Naive thymus-derived CD4-positive, alpha-beta T cell (primary cell): ENCODE measurements at regions of chr6 and their contacts with region 1.

Region 1: GRCh38 chr6:3068329-3069214 is at the start of gene RIPK1:
- DNase-seq: peak; percentile 92 to 98 (median 95)
- ATAC-seq: peak; percentile 88
- H3K4me3 ChIP-seq: peak within 1 kb of the TSS; percentile 86
- H3K4me3 Mint-ChIP-seq: peak within 1 kb of the TSS; percentile 91 to 99 (median 96)
- H3K27ac ChIP-seq: peak within 1 kb of the TSS; percentile 99
- H3K27ac Mint-ChIP-seq: peak within 1 kb of the TSS; percentile 92 to 99 (median 98)
- H3K4me1 ChIP-seq: peaks cover 23% of the 10 kb centered on the region in 2 donors
- H3K4me1 Mint-ChIP-seq: peaks cover 41 to 83% (median 69%) of the 10 kb centered on the region in 7 donors
- H3K27me3 ChIP-seq: no peaks in the 10 kb centered on the region
- H3K27me3 Mint-ChIP-seq: no peaks in the 10 kb centered on the region
- total RNA-seq, gene RIPK1: 20.3 to 34.8 (median 32.4) TPM

Region 2: GRCh38 chr6:2853761-2854395 is 214.7 kb before region 1 on chr6:
- CTCF ChIA-PET with region 1: no interaction called
- POLR2A ChIA-PET with region 1: interaction called, 7 read pairs
- intact Hi-C with region 1: loop called in 1 of 2 experiments (anchors 5 kb)
- DNase-seq: peak in 5 of 9 donors; percentile 23 to 70 (median 40)
- ATAC-seq: peak; percentile 61
- H3K4me3 ChIP-seq: peak overlapping the region; percentile 53
- H3K4me3 Mint-ChIP-seq: peak overlapping the region; percentile 65 to 97 (median 78)
- H3K27ac ChIP-seq: peak overlapping the region; percentile 65
- H3K27ac Mint-ChIP-seq: peak overlapping the region; percentile 79 to 100 (median 98)
- H3K4me1 ChIP-seq: peaks cover 59 to 61% of the 10 kb centered on the region in 2 donors
- H3K4me1 Mint-ChIP-seq: peaks cover 42 to 74% (median 71%) of the 10 kb centered on the region in 7 donors
- H3K27me3 ChIP-seq: no peaks in the 10 kb centered on the region
- H3K27me3 Mint-ChIP-seq: no peaks in the 10 kb centered on the region

Region 3: GRCh38 chr6:3031857-3032640 is 36.5 kb before region 1 on chr6:
- CTCF ChIA-PET with region 1: interaction called, 3 read pairs
- POLR2A ChIA-PET with region 1: interaction called, 6 read pairs
- intact Hi-C with region 1: loop called in 1 of 2 experiments (anchors 1 kb)
- DNase-seq: peak in 4 of 9 donors; percentile 18 to 43 (median 36)
- ATAC-seq: peak; percentile 61
- H3K4me3 ChIP-seq: no peak overlapping the region
- H3K4me3 Mint-ChIP-seq: no peak overlapping the region
- H3K27ac ChIP-seq: no peak overlapping the region
- H3K27ac Mint-ChIP-seq: no peak overlapping the region
- H3K4me1 ChIP-seq: peaks cover 5% of the 10 kb centered on the region in 2 donors
- H3K4me1 Mint-ChIP-seq: peaks cover 3 to 25% (median 14%) of the 10 kb centered on the region in 7 donors
- H3K27me3 ChIP-seq: no peaks in the 10 kb centered on the region
- H3K27me3 Mint-ChIP-seq: peaks cover 0 to 47% (median 0%) of the 10 kb centered on the region in 5 donors

Region 4: GRCh38 chr6:3125815-3126214 is 57.2 kb after region 1 on chr6:
- CTCF ChIA-PET with region 1: no interaction called
- POLR2A ChIA-PET with region 1: interaction called, 5 read pairs
- intact Hi-C with region 1: loop called in 1 of 2 experiments (anchors 2 kb)
- DNase-seq: no peak
- ATAC-seq: no peak
- H3K4me3 ChIP-seq: no peak overlapping the region
- H3K4me3 Mint-ChIP-seq: no peak overlapping the region
- H3K27ac ChIP-seq: no peak overlapping the region
- H3K27ac Mint-ChIP-seq: no peak overlapping the region
- H3K4me1 ChIP-seq: no peaks in the 10 kb centered on the region
- H3K4me1 Mint-ChIP-seq: peaks cover 0 to 3% (median 0%) of the 10 kb centered on the region in 7 donors
- H3K27me3 ChIP-seq: no peaks in the 10 kb centered on the region
- H3K27me3 Mint-ChIP-seq: no peaks in the 10 kb centered on the region

Region 5: DNA sequence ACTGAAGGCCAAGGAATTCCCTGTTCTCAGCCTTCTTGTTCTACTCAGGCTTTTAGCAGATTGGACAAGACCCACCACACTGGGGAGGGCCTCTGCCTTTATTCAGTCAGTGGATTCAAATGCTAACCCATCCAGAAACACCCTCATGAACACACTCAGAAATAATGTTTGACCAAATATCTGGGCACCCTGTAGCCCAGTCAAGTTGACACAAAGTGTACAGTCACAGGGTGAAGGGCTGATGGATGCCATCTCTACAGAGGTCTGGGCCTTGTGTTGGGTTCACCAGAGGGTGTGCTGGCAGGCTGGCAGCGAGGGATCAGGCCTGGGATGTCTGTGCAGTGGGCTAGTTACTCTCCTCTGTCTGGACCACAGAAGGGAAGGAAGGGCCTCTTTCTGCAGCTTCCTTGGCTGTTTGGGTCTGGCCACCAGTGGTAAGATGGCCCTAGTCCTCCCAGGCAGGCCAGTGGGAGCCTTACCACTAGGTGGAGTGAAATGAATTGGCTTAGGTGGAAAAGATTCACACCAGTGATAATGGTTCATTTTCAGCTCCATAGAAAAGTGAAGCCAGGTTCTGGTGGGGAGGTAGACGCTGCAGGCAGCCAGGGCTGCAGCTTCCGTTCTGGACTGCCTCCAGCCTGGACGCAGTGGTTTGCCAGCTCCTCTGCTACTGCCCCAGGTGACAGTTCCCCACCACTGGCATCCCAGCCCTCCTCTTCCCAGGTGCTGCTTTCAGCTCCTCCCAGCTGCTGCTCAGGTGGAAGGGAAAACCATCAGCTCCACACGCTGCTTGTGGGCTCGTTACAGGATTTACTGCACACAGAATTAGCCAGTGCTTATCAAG is 79.6 kb after region 1 on chr6:
- CTCF ChIA-PET with region 1: no interaction called
- POLR2A ChIA-PET with region 1: no interaction called
- intact Hi-C with region 1: no loop called
- DNase-seq: no peak
- ATAC-seq: no peak
- H3K4me3 ChIP-seq: no peak overlapping the region
- H3K4me3 Mint-ChIP-seq: no peak overlapping the region
- H3K27ac ChIP-seq: no peak overlapping the region
- H3K27ac Mint-ChIP-seq: no peak overlapping the region
- H3K4me1 ChIP-seq: no peaks in the 10 kb centered on the region
- H3K4me1 Mint-ChIP-seq: peaks cover 0 to 6% (median 0%) of the 10 kb centered on the region in 7 donors
- H3K27me3 ChIP-seq: no peaks in the 10 kb centered on the region
- H3K27me3 Mint-ChIP-seq: no peaks in the 10 kb centered on the region

Region 6: DNA sequence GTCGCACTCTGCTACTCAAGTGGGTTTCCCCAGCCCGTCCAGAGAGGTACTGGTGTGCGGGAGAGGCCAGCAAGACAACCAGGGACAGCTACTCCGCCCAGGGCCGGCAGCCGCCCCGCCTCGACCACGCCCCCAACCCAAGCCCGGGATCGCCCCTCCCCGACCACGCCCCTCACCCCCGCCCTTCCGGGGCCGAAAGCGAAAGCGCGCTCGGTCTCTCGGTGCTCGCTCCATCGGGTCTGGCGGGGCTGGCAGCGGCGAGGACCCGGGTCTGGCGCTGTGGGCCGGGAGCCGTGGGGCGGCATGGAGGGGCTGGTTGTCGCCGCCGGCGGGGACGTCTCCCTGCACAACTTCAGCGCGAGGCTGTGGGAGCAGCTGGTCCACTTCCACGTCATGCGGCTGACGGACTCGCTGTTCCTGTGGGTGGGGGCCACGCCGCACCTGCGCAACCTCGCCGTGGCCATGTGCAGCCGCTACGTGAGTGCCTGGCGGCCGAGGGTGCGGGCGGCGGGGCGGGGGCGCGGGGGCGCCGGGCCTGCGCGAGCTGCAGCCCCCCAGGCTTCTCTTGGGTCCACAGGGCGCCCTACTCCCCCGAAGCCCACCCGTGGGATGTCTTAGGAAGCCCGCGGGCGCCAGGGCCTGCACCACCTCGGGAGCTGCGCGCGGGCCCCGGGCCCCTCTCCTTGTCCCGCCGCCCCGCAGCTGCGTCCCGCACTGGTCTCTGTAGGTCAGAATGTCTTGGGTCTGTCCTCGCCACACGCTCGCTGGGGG is 190.3 kb after region 1 on chr6 and contains the start of gene PSMG4:
- CTCF ChIA-PET with region 1: no interaction called
- POLR2A ChIA-PET with region 1: interaction called, 3 read pairs
- intact Hi-C with region 1: loop called (anchors 1 to 2 kb)
- DNase-seq: peak; percentile 81 to 98 (median 89)
- ATAC-seq: peak; percentile 97
- H3K4me3 ChIP-seq: peak within 1 kb of the TSS; percentile 85
- H3K4me3 Mint-ChIP-seq: peak within 1 kb of the TSS; percentile 85 to 99 (median 97)
- H3K27ac ChIP-seq: peak within 1 kb of the TSS; percentile 80
- H3K27ac Mint-ChIP-seq: peak within 1 kb of the TSS; percentile 84 to 98 (median 92)
- H3K4me1 ChIP-seq: peaks cover 19 to 26% of the 10 kb centered on the region in 2 donors
- H3K4me1 Mint-ChIP-seq: peaks cover 28 to 45% (median 42%) of the 10 kb centered on the region in 7 donors
- H3K27me3 ChIP-seq: no peaks in the 10 kb centered on the region
- H3K27me3 Mint-ChIP-seq: peaks cover 0 to 25% (median 0%) of the 10 kb centered on the region in 5 donors
- total RNA-seq, gene PSMG4: 15.6 to 45.0 (median 27.7) TPM

Region 7: GRCh38 chr6:3848925-3849605 is 780.5 kb after region 1 on chr6 and contains the start of gene FAM50B:
- CTCF ChIA-PET with region 1: no interaction called
- POLR2A ChIA-PET with region 1: no interaction called
- intact Hi-C with region 1: loop called in 1 of 2 experiments (anchors 2 kb)
- DNase-seq: peak; percentile 84 to 92 (median 90)
- ATAC-seq: peak; percentile 99
- H3K4me3 ChIP-seq: peak within 1 kb of the TSS; percentile 72
- H3K4me3 Mint-ChIP-seq: peak within 1 kb of the TSS; percentile 68 to 89 (median 80)
- H3K27ac ChIP-seq: peak within 1 kb of the TSS; percentile 59
- H3K27ac Mint-ChIP-seq: peak within 1 kb of the TSS; percentile 27 to 95 (median 78)
- H3K4me1 ChIP-seq: peaks cover 0 to 6% of the 10 kb centered on the region in 2 donors
- H3K4me1 Mint-ChIP-seq: peaks cover 0 to 26% (median 16%) of the 10 kb centered on the region in 7 donors
- H3K27me3 ChIP-seq: no peaks in the 10 kb centered on the region
- H3K27me3 Mint-ChIP-seq: peaks cover 0 to 3% (median 0%) of the 10 kb centered on the region in 5 donors
- total RNA-seq, gene FAM50B: 3.4 to 14.1 (median 12.0) TPM